Activated CD8-positive, alpha-beta memory T cell treated with anti-CD3 and anti-CD28 coated beads, Interleukin-2, amount 10 ng/mL, durations not matched to agents 7 days and 5 days (primary cell): ENCODE measurements at regions of chr19 and their contacts with region 1.

Region 1: GRCh38 chr19:45059278-45059965 is 16.9 kb downstream of the ZNF296 start:
- DNase-seq: peak; percentile 88
- ATAC-seq: peak; percentile 91
- H3K4me3 Mint-ChIP-seq: no peak overlapping the region
- H3K27ac Mint-ChIP-seq: peak overlapping the region; percentile 25
- H3K4me1 Mint-ChIP-seq: no peaks in the 10 kb centered on the region
- H3K27me3 Mint-ChIP-seq: no peaks in the 10 kb centered on the region

Region 2: DNA sequence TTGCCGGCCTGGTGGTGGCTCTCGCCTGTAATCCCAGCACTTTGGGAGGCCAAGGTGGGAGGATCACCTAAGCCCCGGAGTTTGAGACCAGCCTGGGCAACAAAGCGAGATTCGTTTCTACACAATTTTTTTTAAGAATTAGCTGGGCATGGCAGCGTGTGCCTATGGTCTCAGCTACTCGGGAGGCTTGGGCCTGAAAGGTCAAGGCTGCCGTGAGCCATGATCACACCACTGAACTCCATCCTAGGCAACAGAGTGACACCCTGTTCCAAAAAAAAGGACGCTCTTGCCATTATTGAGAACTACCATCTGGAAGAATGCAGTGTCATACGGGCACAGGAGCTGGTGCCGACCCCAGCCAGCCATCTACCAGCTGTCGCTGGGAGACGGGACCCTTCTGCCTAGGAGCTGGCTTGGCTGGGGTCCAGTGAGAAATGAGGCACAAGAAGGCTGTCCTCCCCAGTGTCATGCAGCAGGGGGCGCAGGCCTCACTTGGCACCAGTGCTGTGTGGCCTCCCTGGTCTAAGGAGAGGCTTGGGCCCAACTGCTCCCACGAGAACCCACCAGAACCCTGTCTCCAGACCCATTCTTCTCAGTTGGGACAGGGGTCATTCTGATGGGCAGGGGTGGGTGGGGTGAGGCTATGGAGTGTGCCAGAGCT is 70.4 kb before region 1 on chr19:
- CTCF ChIA-PET with region 1: interaction called, 13 read pairs
- DNase-seq: peak; percentile 75
- ATAC-seq: peak; percentile 88
- H3K4me3 Mint-ChIP-seq: no peak overlapping the region
- H3K27ac Mint-ChIP-seq: no peak overlapping the region
- H3K4me1 Mint-ChIP-seq: peaks cover 4% of the 10 kb centered on the region
- H3K27me3 Mint-ChIP-seq: no peaks in the 10 kb centered on the region

Region 3: DNA sequence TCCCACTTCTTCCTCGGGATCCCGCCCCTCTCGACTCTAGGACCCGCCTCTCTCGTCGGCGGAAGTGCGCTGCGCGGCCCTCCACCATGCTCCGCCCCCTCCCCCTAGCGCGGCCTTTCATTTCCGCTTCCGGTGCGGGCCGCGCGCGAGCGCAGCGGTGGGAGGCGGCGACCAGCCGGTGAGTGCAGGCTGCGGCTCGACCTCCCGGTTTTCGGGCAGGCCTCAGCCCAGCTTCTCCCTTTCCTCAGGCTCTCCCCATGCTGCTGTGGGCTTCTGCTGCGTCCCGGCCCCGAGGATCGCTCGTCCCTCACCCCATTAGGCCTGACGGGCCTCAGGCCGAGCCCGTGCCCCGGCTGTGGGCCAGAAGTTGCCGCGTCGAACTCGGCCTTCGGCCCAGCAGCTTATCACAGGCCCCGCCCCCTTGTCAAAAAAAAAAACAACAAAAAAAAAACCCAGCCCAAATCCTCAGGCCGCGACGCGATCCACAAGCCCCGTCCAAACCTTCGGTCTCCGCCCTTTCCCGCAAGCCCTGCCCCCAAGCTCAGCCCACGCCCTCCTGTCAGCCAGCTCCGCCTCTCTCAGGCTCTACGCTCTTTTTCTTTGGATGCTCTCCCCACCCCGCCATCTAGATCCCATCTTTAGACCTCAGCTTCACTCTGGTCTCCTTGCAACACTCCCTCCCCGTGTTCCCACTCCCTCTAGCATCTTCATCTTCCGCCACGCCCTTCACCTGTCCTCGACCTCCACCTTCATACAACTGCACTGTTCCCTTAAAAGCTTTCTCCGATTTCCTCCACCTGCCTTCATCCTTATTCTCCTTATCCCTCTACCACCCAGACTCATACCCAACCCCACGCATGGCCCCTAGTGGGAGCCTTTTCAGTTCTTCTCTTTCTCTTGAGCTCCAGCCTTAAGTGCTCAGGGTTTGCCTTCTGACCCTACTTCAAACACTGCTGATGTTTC is 20.2 kb before region 1 on chr19 and contains the start of gene CLASRP:
- CTCF ChIA-PET with region 1: interaction called, 25 read pairs
- DNase-seq: peak; percentile 92
- ATAC-seq: peak; percentile 97
- H3K4me3 Mint-ChIP-seq: peak within 1 kb of the TSS; percentile 92
- H3K27ac Mint-ChIP-seq: peak within 1 kb of the TSS; percentile 93
- H3K4me1 Mint-ChIP-seq: peaks cover 28% of the 10 kb centered on the region
- H3K27me3 Mint-ChIP-seq: no peaks in the 10 kb centered on the region
- total RNA-seq, gene CLASRP: 114 to 121 TPM

Region 4: GRCh38 chr19:45071969-45072790 is 12.8 kb after region 1 on chr19:
- CTCF ChIA-PET with region 1: interaction called, 11 read pairs
- DNase-seq: no peak
- ATAC-seq: no peak
- H3K4me3 Mint-ChIP-seq: no peak overlapping the region
- H3K27ac Mint-ChIP-seq: peak overlapping the region; percentile 38
- H3K4me1 Mint-ChIP-seq: peaks cover 12% of the 10 kb centered on the region
- H3K27me3 Mint-ChIP-seq: no peaks in the 10 kb centered on the region

Region 5: GRCh38 chr19:45092747-45093678 is 33.6 kb after region 1 on chr19 and contains the start of gene PPP1R37:
- CTCF ChIA-PET with region 1: interaction called, 12 read pairs
- DNase-seq: peak; percentile 94
- ATAC-seq: peak; percentile 84
- H3K4me3 Mint-ChIP-seq: peak within 1 kb of the TSS; percentile 88
- H3K27ac Mint-ChIP-seq: peak within 1 kb of the TSS; percentile 95
- H3K4me1 Mint-ChIP-seq: peaks cover 67% of the 10 kb centered on the region
- H3K27me3 Mint-ChIP-seq: no peaks in the 10 kb centered on the region
- total RNA-seq, gene PPP1R37: 18.7 to 30.0 TPM

Region 6: GRCh38 chr19:45178262-45179071 is 119.0 kb after region 1 on chr19 and contains the start of gene BLOC1S3:
- CTCF ChIA-PET with region 1: no interaction called
- DNase-seq: peak; percentile 100
- ATAC-seq: peak; percentile 90
- H3K4me3 Mint-ChIP-seq: peak within 1 kb of the TSS; percentile 84
- H3K27ac Mint-ChIP-seq: peak within 1 kb of the TSS; percentile 92
- H3K4me1 Mint-ChIP-seq: peaks cover 37% of the 10 kb centered on the region
- H3K27me3 Mint-ChIP-seq: no peaks in the 10 kb centered on the region
- total RNA-seq, gene BLOC1S3: 15.7 to 17.6 TPM